ENCODE measurements at regions of chr17 and their contacts with region 1.

Region 1: GRCh38 chr17:78759203-78759968 is 22.7 kb downstream of the CYTH1 start:
- DNase-seq: peak; percentile 87 to 95 (median 92)
- H3K4me3 ChIP-seq: peak overlapping the region; percentile 26 to 51
- H3K4me3 Mint-ChIP-seq: peak overlapping the region; percentile 67 to 92 (median 83)
- H3K27ac ChIP-seq: peak overlapping the region; percentile 88
- H3K27ac Mint-ChIP-seq: peak overlapping the region; percentile 91 to 99 (median 98)
- H3K4me1 ChIP-seq: peaks cover 94% of the 10 kb centered on the region
- H3K4me1 Mint-ChIP-seq: peaks cover 56 to 88% (median 61%) of the 10 kb centered on the region in 4 donors
- H3K27me3 ChIP-seq: no peaks in the 10 kb centered on the region
- H3K27me3 Mint-ChIP-seq: no peaks in the 10 kb centered on the region

Region 2: GRCh38 chr17:78573956-78574355 is 185.4 kb before region 1 on chr17:
- CTCF ChIA-PET with region 1: no interaction called
- POLR2A ChIA-PET with region 1: no interaction called
- intact Hi-C with region 1: no loop called
- DNase-seq: peak in 1 of 5 donors; percentile 4
- H3K4me3 ChIP-seq: no peak overlapping the region
- H3K4me3 Mint-ChIP-seq: no peak overlapping the region
- H3K27ac ChIP-seq: no peak overlapping the region
- H3K27ac Mint-ChIP-seq: no peak overlapping the region
- H3K4me1 ChIP-seq: no peaks in the 10 kb centered on the region
- H3K4me1 Mint-ChIP-seq: no peaks in the 10 kb centered on the region
- H3K27me3 ChIP-seq: no peaks in the 10 kb centered on the region
- H3K27me3 Mint-ChIP-seq: peaks cover 1 to 6% of the 10 kb centered on the region in 2 donors

Region 3: DNA sequence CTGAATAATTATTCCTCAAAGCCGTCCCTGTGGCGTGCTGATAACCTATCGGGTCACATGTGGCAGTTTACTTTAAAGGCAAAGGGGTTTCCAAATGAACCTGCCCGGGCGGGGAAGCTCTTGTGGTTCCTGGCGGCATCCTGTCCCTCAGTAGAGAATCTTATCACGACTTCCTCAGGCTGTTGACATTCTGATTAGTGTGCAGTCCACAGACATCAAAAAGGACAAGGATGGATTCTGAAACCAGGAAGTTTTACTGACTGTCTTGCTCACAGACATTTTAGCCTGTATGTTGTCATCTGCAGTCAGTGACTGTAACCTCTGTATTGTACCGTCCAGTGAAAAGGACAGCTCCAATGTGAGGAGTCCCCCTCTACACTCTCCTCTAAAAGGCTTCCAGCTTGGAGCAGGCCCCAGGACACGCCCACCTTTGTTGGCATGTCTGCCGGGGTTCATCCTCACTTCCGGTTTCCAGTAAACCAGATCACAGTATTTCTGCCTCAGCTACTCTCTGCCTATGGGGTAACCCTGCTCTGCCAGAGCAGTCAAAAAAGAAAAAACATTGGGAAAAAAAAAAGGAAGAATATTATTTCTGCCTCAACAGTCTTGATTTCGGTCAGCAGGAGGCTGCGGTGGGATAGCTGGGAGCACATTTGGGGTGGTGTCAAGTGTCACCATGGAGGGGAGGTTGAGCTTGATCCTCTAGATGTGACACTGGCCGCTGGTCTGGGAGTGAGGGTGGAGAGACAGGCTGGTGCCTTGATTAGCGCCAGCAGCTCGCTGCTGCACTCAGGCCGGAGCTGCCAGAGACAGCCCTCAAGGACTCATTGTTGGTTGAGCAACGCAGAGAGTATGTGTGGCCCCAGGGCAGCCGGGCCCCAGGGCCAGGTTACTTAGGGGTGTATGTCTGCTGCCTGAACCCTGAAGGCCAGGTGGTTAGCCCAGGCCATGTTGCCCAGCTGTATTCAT is 93.2 kb before region 1 on chr17:
- CTCF ChIA-PET with region 1: no interaction called
- POLR2A ChIA-PET with region 1: no interaction called
- intact Hi-C with region 1: no loop called
- DNase-seq: peak; percentile 63 to 84 (median 70)
- H3K4me3 ChIP-seq: peak overlapping the region in 1 of 2 donors; percentile 36
- H3K4me3 Mint-ChIP-seq: peak overlapping the region; percentile 26 to 86 (median 66)
- H3K27ac ChIP-seq: peak overlapping the region; percentile 33
- H3K27ac Mint-ChIP-seq: peak overlapping the region; percentile 80 to 93 (median 86)
- H3K4me1 ChIP-seq: peaks cover 35% of the 10 kb centered on the region
- H3K4me1 Mint-ChIP-seq: peaks cover 33 to 62% (median 48%) of the 10 kb centered on the region in 4 donors
- H3K27me3 ChIP-seq: no peaks in the 10 kb centered on the region
- H3K27me3 Mint-ChIP-seq: no peaks in the 10 kb centered on the region

Region 4: GRCh38 chr17:78723001-78723796 is 36.2 kb before region 1 on chr17:
- CTCF ChIA-PET with region 1: interaction called, 3 read pairs
- POLR2A ChIA-PET with region 1: interaction called, 20 read pairs
- intact Hi-C with region 1: no loop called
- DNase-seq: no peak
- H3K4me3 ChIP-seq: no peak overlapping the region
- H3K4me3 Mint-ChIP-seq: peak overlapping the region; percentile 56 to 91 (median 70)
- H3K27ac ChIP-seq: no peak overlapping the region
- H3K27ac Mint-ChIP-seq: peak overlapping the region in 6 of 7 donors; percentile 77 to 92 (median 86)
- H3K4me1 ChIP-seq: peaks cover 100% of the 10 kb centered on the region
- H3K4me1 Mint-ChIP-seq: peaks cover 77 to 97% (median 90%) of the 10 kb centered on the region in 4 donors
- H3K27me3 ChIP-seq: no peaks in the 10 kb centered on the region
- H3K27me3 Mint-ChIP-seq: no peaks in the 10 kb centered on the region

Region 5: GRCh38 chr17:78789663-78790181 is 30.3 kb after region 1 on chr17:
- CTCF ChIA-PET with region 1: interaction called, 3 read pairs
- POLR2A ChIA-PET with region 1: interaction called, 961 read pairs
- intact Hi-C with region 1: no loop called
- DNase-seq: peak; percentile 76 to 85 (median 78)
- H3K4me3 ChIP-seq: no peak overlapping the region
- H3K4me3 Mint-ChIP-seq: peak overlapping the region in 7 of 8 donors; percentile 37 to 84 (median 70)
- H3K27ac ChIP-seq: peak overlapping the region; percentile 48
- H3K27ac Mint-ChIP-seq: peak overlapping the region; percentile 81 to 97 (median 95)
- H3K4me1 ChIP-seq: peaks cover 74% of the 10 kb centered on the region
- H3K4me1 Mint-ChIP-seq: peaks cover 39 to 89% (median 63%) of the 10 kb centered on the region in 4 donors
- H3K27me3 ChIP-seq: no peaks in the 10 kb centered on the region
- H3K27me3 Mint-ChIP-seq: no peaks in the 10 kb centered on the region

Measured in CD4-positive, alpha-beta memory T cell (primary cell).